ENCODE measurements at regions of chr9 and their contacts with region 1.

Region 1: DNA sequence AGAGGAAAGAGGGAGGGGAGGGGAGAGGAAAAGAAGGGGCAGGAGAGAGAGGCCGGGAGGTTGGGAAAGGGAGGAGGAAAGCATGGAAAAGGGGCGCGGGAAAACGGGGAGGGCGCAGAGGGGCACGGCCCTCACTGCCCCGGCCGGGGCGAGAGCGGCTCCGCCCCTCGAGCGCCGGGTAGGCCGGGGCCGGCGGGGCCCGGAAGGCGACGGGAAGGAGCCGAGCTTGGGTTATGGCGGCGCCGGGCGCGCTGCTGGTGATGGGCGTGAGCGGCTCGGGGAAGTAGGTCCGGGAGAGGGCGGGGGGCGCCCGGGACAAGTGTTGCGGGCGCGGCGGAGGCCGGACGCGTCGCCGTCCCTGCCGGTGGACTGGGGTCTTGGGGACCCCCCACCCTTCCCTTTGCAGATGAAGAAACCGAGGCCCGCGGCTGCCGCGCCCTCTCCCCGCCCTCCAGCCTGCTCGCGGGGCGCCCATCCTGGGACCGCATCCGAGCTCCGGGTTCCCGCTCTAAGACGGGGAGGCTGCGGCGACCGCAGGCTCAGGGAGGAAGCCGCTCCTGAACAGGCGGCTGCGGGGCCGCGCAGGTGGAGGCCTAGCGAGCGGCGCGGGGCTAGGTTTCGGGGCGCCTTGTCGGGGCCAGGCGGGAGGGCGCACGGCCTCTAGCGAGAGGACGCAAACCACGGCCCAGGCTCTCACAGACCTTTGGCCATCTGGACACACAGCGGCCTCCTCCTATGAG is at the start of gene IDNK:
- DNase-seq: peak; percentile 74 to 90 (median 88)
- ATAC-seq: peak; percentile 94 to 97
- H3K4me3 ChIP-seq: peak within 1 kb of the TSS; percentile 83
- H3K27ac ChIP-seq: peak within 1 kb of the TSS; percentile 57
- H3K4me1 ChIP-seq: no peaks in the 10 kb centered on the region
- H3K27me3 ChIP-seq: no peaks in the 10 kb centered on the region
- total RNA-seq, gene IDNK: 2.8 to 5.1 (median 4.1) TPM

Region 2: GRCh38 chr9:83473488-83473971 is 149.6 kb before region 1 on chr9:
- intact Hi-C with region 1: no loop called
- DNase-seq: no peak
- ATAC-seq: no peak
- H3K4me3 ChIP-seq: no peak overlapping the region
- H3K27ac ChIP-seq: no peak overlapping the region
- H3K4me1 ChIP-seq: peaks cover 13% of the 10 kb centered on the region
- H3K27me3 ChIP-seq: no peaks in the 10 kb centered on the region

Region 3: GRCh38 chr9:83707768-83708514 is 84.8 kb after region 1 on chr9 and contains the start of gene UBQLN1:
- intact Hi-C with region 1: loop called in 1 of 4 experiments (anchors 10 kb)
- DNase-seq: peak; percentile 96 to 98 (median 96)
- ATAC-seq: peak; percentile 98
- H3K4me3 ChIP-seq: peak within 1 kb of the TSS; percentile 65
- H3K27ac ChIP-seq: peak within 1 kb of the TSS; percentile 95
- H3K4me1 ChIP-seq: no peaks in the 10 kb centered on the region
- H3K27me3 ChIP-seq: no peaks in the 10 kb centered on the region
- total RNA-seq, gene UBQLN1: 81.3 to 88.8 (median 87.1) TPM